K562 (cell line): ENCODE measurements at regions of chr3 and their contacts with region 1.

Region 1: GRCh38 chr3:63863148-63864007 is at the starts of genes ATXN7 and THOC7:
- DNase-seq: peak; percentile 57 to 77 (median 68)
- ATAC-seq: peak; percentile 82
- H3K4me3 ChIP-seq: peak within 1 kb of the TSS; percentile 89
- H3K27ac ChIP-seq: peak within 1 kb of the TSS; percentile 96
- H3K4me1 ChIP-seq: peaks cover 4% of the 10 kb centered on the region in 2 experiments; a peak in 4 of 5 replicates
- H3K27me3 ChIP-seq: no peaks in the 10 kb centered on the region
- CTCF ChIP-seq: no peak
- EP300 ChIP-seq: no peak
- POLR2A ChIP-seq: 0 out of 2 replicates have a peak, but pooled peaks have one; percentile 17
- RAD21 ChIP-seq: no peak
- polyA plus RNA-seq, gene ATXN7: 0.41 to 1.3 TPM
- polyA plus RNA-seq, gene THOC7: 121 to 129 TPM

Region 2: GRCh38 chr3:63896332-63897030 is 33.1 kb after region 1 on chr3:
- CTCF ChIA-PET with region 1: no interaction called
- POLR2A ChIA-PET with region 1: no interaction called
- in situ Hi-C with region 1: no loop called
- intact Hi-C with region 1: no loop called
- DNase-seq: no peak
- ATAC-seq: no peak
- H3K4me3 ChIP-seq: no peak overlapping the region
- H3K27ac ChIP-seq: no peak overlapping the region
- H3K4me1 ChIP-seq: peaks cover 0 to 4% of the 10 kb centered on the region in 2 experiments; a peak in 2 of 5 replicates
- H3K27me3 ChIP-seq: no peaks in the 10 kb centered on the region
- CTCF ChIP-seq: no peak
- EP300 ChIP-seq: no peak
- POLR2A ChIP-seq: no peak
- RAD21 ChIP-seq: no peak

Region 3: GRCh38 chr3:63911873-63912767 is 48.7 kb after region 1 on chr3 and contains the start of gene SCAANT1:
- CTCF ChIA-PET with region 1: no interaction called
- POLR2A ChIA-PET with region 1: no interaction called
- in situ Hi-C with region 1: no loop called
- intact Hi-C with region 1: loop called (anchors 5 kb)
- DNase-seq: peak; percentile 72 to 80 (median 77)
- ATAC-seq: peak; percentile 94
- H3K4me3 ChIP-seq: peak within 1 kb of the TSS; percentile 65
- H3K27ac ChIP-seq: peak within 1 kb of the TSS; percentile 88
- H3K4me1 ChIP-seq: peaks cover 9 to 13% of the 10 kb centered on the region in 2 experiments
- H3K27me3 ChIP-seq: no peaks in the 10 kb centered on the region
- CTCF ChIP-seq: 0 out of 6 replicates have a peak, but pooled peaks of 1 of the 3 experiments have one; percentile 7
- EP300 ChIP-seq: no peak
- POLR2A ChIP-seq: peak; percentile 67; the same call in 1 of the 2 replicates
- RAD21 ChIP-seq: no peak
- polyA plus RNA-seq, gene SCAANT1: not detected

Region 4: DNA sequence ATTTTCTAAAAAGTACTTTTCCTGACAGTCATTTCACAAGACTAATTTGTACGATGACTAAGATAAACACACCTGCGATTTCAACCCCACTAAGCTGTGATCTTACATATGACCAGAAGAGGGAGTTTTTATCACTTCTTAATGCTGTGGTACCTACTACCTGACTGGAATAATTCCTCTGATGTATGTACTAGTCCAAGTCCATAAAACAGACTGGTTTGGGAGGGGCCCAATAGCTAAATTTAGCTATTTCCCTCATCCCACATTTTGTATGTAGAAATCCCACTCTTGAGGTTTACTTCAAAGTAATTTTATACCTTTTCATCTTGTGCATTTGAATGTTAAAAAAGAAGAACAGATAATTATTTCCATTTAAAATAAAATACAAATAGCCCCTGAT is 98.5 kb after region 1 on chr3:
- CTCF ChIA-PET with region 1: no interaction called
- POLR2A ChIA-PET with region 1: interaction called, 3 read pairs
- in situ Hi-C with region 1: no loop called
- intact Hi-C with region 1: loop called (anchors 10 kb)
- DNase-seq: peak; percentile 24 to 52 (median 44)
- ATAC-seq: peak; percentile 77
- H3K4me3 ChIP-seq: no peak overlapping the region
- H3K27ac ChIP-seq: no peak overlapping the region
- H3K4me1 ChIP-seq: peaks cover 3 to 15% of the 10 kb centered on the region in 2 experiments; a peak in 4 of 5 replicates
- H3K27me3 ChIP-seq: no peaks in the 10 kb centered on the region
- CTCF ChIP-seq: peak in 2 of 3 experiments; percentile 42 to 44; a peak in 3 of 6 replicates
- EP300 ChIP-seq: no peak
- POLR2A ChIP-seq: no peak
- RAD21 ChIP-seq: peak in 1 of 2 experiments; percentile 27; a peak in 1 of 4 replicates

Region 5: GRCh38 chr3:64016941-64017620 is 153.7 kb after region 1 on chr3:
- CTCF ChIA-PET with region 1: no interaction called
- POLR2A ChIA-PET with region 1: no interaction called
- in situ Hi-C with region 1: no loop called
- intact Hi-C with region 1: loop called (anchors 5 kb)
- DNase-seq: no peak
- ATAC-seq: no peak
- H3K4me3 ChIP-seq: no peak overlapping the region
- H3K27ac ChIP-seq: no peak overlapping the region
- H3K4me1 ChIP-seq: peaks cover 0 to 17% of the 10 kb centered on the region in 2 experiments; a peak in 4 of 5 replicates
- H3K27me3 ChIP-seq: no peaks in the 10 kb centered on the region
- CTCF ChIP-seq: no peak
- EP300 ChIP-seq: no peak
- POLR2A ChIP-seq: no peak
- RAD21 ChIP-seq: no peak